ENCODE measurements at regions of chr6 and their contacts with region 1.

Region 1: DNA sequence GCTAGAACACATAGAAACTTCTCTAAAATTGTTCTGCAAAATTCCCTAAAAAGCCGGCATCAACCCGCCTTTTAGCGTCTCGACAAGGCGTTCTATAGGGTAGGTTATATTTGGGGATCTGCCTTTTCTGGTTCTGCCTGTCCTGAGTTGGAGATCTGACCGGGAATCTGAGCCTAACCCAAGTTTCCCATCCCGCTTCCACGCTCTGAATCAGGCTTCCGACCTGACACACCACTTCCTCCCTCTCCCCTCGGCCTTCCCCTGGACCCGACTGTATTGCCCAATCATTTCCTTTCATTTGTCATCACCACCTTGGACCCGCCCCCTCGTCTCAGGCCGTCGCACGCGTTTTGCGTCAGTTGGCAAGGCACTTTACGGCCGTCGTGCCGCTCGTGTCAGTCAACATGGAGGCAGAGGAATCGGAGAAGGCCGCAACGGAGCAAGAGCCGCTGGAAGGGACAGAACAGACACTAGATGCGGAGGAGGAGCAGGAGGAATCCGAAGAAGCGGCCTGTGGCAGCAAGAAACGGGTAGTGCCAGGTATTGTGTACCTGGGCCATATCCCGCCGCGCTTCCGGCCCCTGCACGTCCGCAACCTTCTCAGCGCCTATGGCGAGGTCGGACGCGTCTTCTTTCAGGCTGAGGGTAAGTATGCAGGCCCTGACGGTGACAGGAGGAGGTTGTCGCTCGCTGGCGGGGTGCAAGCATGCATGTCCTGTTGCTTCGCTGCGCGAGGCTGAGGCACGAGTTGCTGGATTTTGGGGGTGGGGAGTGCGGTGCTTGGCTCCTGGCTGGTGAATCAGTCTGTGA is at the start of gene ABT1:
- DNase-seq: peak; percentile 91 to 99
- H3K4me3 ChIP-seq: peak within 1 kb of the TSS; percentile 92 to 100 (median 99)
- H3K27ac ChIP-seq: peak within 1 kb of the TSS; percentile 72
- H3K4me1 ChIP-seq: peaks cover 0 to 5% (median 2%) of the 10 kb centered on the region in 4 experiments; a peak in 5 of 7 replicates
- H3K27me3 ChIP-seq: no peaks in the 10 kb centered on the region
- CTCF ChIP-seq: no peak
- EP300 ChIP-seq: no peak
- POLR2A ChIP-seq: peak; percentile 40 to 78
- RAD21 ChIP-seq: no peak
- total RNA-seq, gene ABT1: 20.5 and 20.6 TPM in 2 replicates

Region 2: GRCh38 chr6:26322645-26323482 is 273.9 kb before region 1 on chr6:
- CTCF ChIA-PET with region 1: interaction called, 11 read pairs
- POLR2A ChIA-PET with region 1: no interaction called
- DNase-seq: peak in 1 of 2 experiments; percentile 81
- H3K4me3 ChIP-seq: peak overlapping the region; percentile 70 to 89 (median 78)
- H3K27ac ChIP-seq: no peak overlapping the region
- H3K4me1 ChIP-seq: peaks cover 0 to 5% (median 2%) of the 10 kb centered on the region in 4 experiments; a peak in 3 of 7 replicates
- H3K27me3 ChIP-seq: peaks cover 0 to 4% (median 0%) of the 10 kb centered on the region in 4 experiments; a peak in 1 of 7 replicates
- CTCF ChIP-seq: no peak
- EP300 ChIP-seq: no peak
- POLR2A ChIP-seq: no peak
- RAD21 ChIP-seq: no peak

Region 3: DNA sequence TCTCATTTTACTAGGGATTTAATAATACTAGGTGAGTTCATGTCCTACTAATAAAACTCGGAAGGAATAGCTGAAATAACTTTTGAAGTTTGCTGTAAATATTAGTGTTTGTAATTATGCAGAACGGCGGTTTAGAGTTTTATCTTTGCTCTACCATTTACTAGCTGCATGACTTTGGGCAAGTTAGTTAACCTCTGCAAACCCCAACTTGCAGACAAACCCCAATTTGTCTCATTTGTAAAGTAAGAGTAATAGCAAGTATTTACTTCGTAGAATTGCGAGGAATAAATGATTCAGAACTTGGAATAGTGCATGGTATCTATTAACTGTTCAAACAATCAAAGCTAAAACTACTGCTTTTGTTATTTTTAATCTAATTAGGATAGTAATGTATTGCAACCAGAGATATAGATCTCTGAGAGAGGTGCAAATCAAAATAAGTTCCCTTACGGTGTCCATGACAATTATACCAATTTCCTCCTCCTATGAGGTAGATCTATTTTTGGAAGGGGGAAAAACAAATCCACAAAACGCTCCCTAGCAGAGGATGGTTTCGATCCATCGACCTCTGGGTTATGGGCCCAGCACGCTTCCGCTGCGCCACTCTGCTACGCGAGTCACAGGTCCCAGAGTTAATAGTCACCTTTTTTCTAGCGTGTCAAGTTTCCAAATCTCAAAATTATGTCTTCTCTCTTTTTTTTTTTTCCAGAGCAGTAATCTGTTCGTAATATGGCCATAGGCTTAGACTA is 266.8 kb before region 1 on chr6:
- CTCF ChIA-PET with region 1: interaction called, 16 read pairs
- POLR2A ChIA-PET with region 1: interaction called, 4 read pairs
- DNase-seq: peak in 1 of 2 experiments; percentile 90
- H3K4me3 ChIP-seq: peak overlapping the region; percentile 72 to 91 (median 81); a peak in 7 of 8 replicates
- H3K27ac ChIP-seq: no peak overlapping the region
- H3K4me1 ChIP-seq: peaks cover 0 to 3% (median 0%) of the 10 kb centered on the region in 4 experiments; a peak in 2 of 7 replicates
- H3K27me3 ChIP-seq: peaks cover 0 to 10% (median 8%) of the 10 kb centered on the region in 4 experiments; a peak in 5 of 7 replicates
- CTCF ChIP-seq: no peak
- EP300 ChIP-seq: no peak
- POLR2A ChIP-seq: no peak
- RAD21 ChIP-seq: no peak

Region 4: GRCh38 chr6:26478985-26479278 is 117.9 kb before region 1 on chr6:
- CTCF ChIA-PET with region 1: no interaction called
- POLR2A ChIA-PET with region 1: no interaction called
- DNase-seq: no peak
- H3K4me3 ChIP-seq: no peak overlapping the region
- H3K27ac ChIP-seq: no peak overlapping the region
- H3K4me1 ChIP-seq: peaks cover 6 to 14% (median 10%) of the 10 kb centered on the region in 4 experiments; a peak in 5 of 7 replicates
- H3K27me3 ChIP-seq: no peaks in the 10 kb centered on the region
- CTCF ChIP-seq: no peak
- EP300 ChIP-seq: no peak
- POLR2A ChIP-seq: no peak
- RAD21 ChIP-seq: no peak

Region 5: DNA sequence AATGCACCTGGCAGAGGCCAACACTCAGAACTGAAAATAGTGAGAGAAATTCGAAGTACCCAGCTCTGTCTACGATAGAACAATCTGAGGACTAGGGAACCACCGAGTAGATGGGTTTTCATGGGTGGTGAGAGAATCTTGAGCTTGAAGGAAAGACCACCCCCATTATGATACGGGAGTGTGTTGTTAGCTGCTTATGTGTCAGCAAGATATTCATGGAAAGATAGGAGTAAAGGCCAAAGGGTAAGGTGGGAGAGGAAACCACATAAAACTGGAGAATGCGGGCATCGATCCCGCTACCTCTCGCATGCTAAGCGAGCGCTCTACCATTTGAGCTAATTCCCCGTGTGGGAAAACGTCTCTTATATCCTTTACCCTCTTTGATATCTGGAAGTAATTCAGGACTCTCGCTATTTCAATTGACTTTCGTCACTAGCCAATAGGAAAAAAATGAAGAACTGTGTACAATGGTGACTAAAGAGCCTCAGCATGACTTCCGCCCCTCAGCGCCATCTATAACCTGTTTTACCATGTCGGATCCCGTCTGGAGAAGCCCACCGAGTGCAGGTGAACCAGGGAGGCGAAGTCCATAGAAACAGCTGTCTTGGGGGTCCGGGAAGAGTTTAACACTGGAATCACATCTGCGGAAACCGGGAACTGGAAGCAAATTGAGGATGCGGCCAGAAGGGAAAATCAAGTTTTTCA is 25.0 kb before region 1 on chr6:
- CTCF ChIA-PET with region 1: interaction called, 134 read pairs
- POLR2A ChIA-PET with region 1: interaction called, 29 read pairs
- DNase-seq: peak in 1 of 2 experiments; percentile 87
- H3K4me3 ChIP-seq: peak overlapping the region; percentile 86 to 92 (median 88)
- H3K27ac ChIP-seq: peak overlapping the region; percentile 35; the same call in 1 of the 2 replicates
- H3K4me1 ChIP-seq: no peaks in the 10 kb centered on the region
- H3K27me3 ChIP-seq: no peaks in the 10 kb centered on the region
- CTCF ChIP-seq: 0 out of 4 replicates have a peak, but pooled peaks of 1 of the 3 experiments have one; percentile 5
- EP300 ChIP-seq: no peak; a peak in 1 of 3 replicates
- POLR2A ChIP-seq: no peak
- RAD21 ChIP-seq: no peak

Region 6: GRCh38 chr6:26576929-26577719 is 19.7 kb before region 1 on chr6:
- CTCF ChIA-PET with region 1: interaction called, 134 read pairs
- POLR2A ChIA-PET with region 1: interaction called, 29 read pairs
- DNase-seq: peak; percentile 88 to 90
- H3K4me3 ChIP-seq: peak overlapping the region; percentile 50 to 86 (median 72)
- H3K27ac ChIP-seq: no peak overlapping the region
- H3K4me1 ChIP-seq: no peaks in the 10 kb centered on the region
- H3K27me3 ChIP-seq: peaks cover 0 to 4% (median 0%) of the 10 kb centered on the region in 4 experiments; a peak in 2 of 7 replicates
- CTCF ChIP-seq: no peak
- EP300 ChIP-seq: no peak
- POLR2A ChIP-seq: no peak
- RAD21 ChIP-seq: no peak

Region 7: DNA sequence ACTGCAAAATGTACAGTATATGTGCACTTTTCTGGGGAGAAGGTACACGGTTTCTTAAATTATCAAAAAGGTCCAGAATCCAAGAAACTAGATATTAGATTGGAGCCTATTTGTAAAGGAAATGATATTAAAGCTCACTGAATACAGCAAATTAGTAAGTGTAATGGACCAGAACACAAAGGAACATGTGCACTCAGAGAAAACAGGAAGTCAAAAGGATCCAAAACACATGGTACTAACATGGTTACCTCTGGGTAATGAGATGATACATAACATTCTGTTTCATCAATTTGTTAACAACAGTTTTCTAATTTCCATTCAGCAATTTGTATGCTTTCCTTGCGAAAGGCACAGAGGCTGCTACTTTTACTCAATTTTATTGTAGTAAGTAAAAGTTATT is 44.0 kb after region 1 on chr6:
- CTCF ChIA-PET with region 1: no interaction called
- POLR2A ChIA-PET with region 1: no interaction called
- DNase-seq: no peak
- H3K4me3 ChIP-seq: no peak overlapping the region
- H3K27ac ChIP-seq: no peak overlapping the region
- H3K4me1 ChIP-seq: no peaks in the 10 kb centered on the region
- H3K27me3 ChIP-seq: no peaks in the 10 kb centered on the region
- CTCF ChIP-seq: no peak
- EP300 ChIP-seq: no peak
- POLR2A ChIP-seq: no peak
- RAD21 ChIP-seq: no peak

Region 8: GRCh38 chr6:28266962-28267694 is 1670.3 kb after region 1 on chr6 and contains the start of gene ZSCAN26:
- CTCF ChIA-PET with region 1: no interaction called
- POLR2A ChIA-PET with region 1: no interaction called
- DNase-seq: peak; percentile 78 to 92
- H3K4me3 ChIP-seq: peak within 1 kb of the TSS; percentile 75 to 80 (median 78)
- H3K27ac ChIP-seq: peak within 1 kb of the TSS; percentile 71
- H3K4me1 ChIP-seq: peaks cover 0 to 2% (median 0%) of the 10 kb centered on the region in 4 experiments; a peak in 1 of 7 replicates
- H3K27me3 ChIP-seq: no peaks in the 10 kb centered on the region
- CTCF ChIP-seq: 0 out of 4 replicates have a peak, but pooled peaks of 1 of the 3 experiments have one; percentile 0
- EP300 ChIP-seq: no peak
- POLR2A ChIP-seq: peak; percentile 65 to 93
- RAD21 ChIP-seq: no peak
- total RNA-seq, gene ZSCAN26: 8.2 and 8.5 TPM in 2 replicates